Naive thymus-derived CD4-positive, alpha-beta T cell (primary cell): ENCODE measurements at regions of chr4 and their contacts with region 1.

Region 1: DNA sequence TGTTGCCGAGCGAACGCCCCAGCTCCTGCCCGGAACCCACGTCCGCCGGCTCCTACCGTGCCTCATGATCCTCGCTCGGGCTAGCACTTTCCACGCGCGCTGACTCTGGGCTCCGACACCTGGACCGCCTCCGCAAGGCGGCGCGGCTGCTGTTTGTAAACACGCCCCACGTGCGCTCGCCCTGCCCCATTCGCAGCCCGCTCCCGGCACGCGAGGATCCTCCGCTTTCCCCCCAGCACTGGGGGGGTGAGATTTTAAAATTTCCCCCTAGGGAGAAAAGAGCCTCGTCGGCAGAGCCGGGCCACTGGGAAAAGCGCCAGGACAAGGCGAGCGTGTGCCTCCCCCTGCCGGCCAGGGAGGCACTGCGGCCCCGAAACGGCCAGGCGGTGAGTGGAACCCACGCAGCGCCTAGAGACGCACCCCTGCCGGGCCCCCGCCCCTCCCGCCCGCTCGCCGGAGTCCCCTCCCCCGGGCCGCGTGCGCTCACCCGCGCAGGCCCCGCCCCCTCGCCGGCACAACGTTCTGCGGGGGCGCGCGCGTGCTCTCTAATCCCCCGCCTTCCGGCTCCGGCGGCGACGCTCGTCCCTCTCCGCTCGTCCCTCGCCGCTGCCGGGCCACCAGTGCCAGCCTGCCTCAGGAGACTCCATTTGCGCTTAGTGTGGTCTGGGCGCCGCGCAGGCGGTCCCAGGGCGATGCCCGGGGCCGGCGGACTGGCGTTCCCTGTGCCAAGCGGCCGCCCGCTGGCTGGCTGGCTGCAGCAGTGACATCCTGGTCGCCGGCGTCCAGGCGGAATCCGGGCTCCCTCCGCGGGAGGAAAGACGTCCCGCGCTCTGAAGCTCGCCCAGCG is at the start of gene TIGD2:
- DNase-seq: peak; percentile 81 to 90 (median 87)
- ATAC-seq: peak; percentile 97
- H3K4me3 ChIP-seq: peak within 1 kb of the TSS; percentile 80
- H3K4me3 Mint-ChIP-seq: peak within 1 kb of the TSS; percentile 84 to 93 (median 90)
- H3K27ac ChIP-seq: peak within 1 kb of the TSS; percentile 81
- H3K27ac Mint-ChIP-seq: peak within 1 kb of the TSS; percentile 80 to 94 (median 89)
- H3K4me1 ChIP-seq: peaks cover 10 to 15% of the 10 kb centered on the region in 2 donors
- H3K4me1 Mint-ChIP-seq: peaks cover 20 to 28% (median 24%) of the 10 kb centered on the region in 7 donors
- H3K27me3 ChIP-seq: no peaks in the 10 kb centered on the region
- H3K27me3 Mint-ChIP-seq: peaks cover 0 to 25% (median 0%) of the 10 kb centered on the region in 5 donors
- total RNA-seq, gene TIGD2: 3.0 to 7.9 (median 5.2) TPM

Region 2: DNA sequence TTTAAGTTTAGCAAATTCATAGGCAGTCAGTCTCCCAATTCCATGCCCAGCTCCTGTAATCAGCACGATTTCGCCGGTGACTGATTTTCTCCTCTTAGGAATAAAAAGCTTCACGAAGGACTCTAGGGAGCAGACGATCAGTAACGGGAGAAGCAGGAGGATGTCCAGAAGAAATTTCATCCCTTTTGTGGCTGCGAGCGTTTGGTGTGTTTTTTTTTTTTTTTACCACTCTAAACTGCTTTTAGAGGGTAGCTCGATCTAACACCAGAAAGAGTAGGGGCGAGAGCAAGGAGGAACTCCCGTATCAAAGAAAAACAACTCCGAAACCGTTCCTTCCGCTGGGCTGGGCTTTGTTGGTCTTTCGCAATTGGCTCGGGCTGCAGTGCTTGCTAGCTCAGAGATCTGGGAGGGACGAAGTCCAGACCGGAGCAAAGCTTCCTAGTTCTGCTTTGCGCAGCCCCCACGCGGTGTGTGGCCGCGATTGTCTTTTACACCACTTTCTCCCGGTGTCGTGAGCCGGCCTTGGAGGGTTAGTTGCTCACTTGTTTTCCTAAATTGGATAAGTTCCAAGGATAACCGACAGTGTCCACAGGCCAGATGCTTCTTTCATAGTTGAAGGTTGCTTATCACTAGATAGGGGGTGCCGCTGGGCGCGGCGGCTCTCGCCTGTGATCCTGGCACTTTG is 1720.2 kb before region 1 on chr4 and contains the start of gene HSD17B11:
- CTCF ChIA-PET with region 1: no interaction called
- POLR2A ChIA-PET with region 1: no interaction called
- intact Hi-C with region 1: loop called in 1 of 2 experiments (anchors 1 kb)
- DNase-seq: peak; percentile 44 to 83 (median 79)
- ATAC-seq: peak; percentile 99
- H3K4me3 ChIP-seq: peak within 1 kb of the TSS; percentile 85
- H3K4me3 Mint-ChIP-seq: peak within 1 kb of the TSS; percentile 87 to 99 (median 97)
- H3K27ac ChIP-seq: peak within 1 kb of the TSS; percentile 82
- H3K27ac Mint-ChIP-seq: peak within 1 kb of the TSS; percentile 83 to 96 (median 94)
- H3K4me1 ChIP-seq: peaks cover 10 to 17% of the 10 kb centered on the region in 2 donors
- H3K4me1 Mint-ChIP-seq: peaks cover 32 to 66% (median 57%) of the 10 kb centered on the region in 7 donors
- H3K27me3 ChIP-seq: no peaks in the 10 kb centered on the region
- H3K27me3 Mint-ChIP-seq: peaks cover 0 to 14% (median 0%) of the 10 kb centered on the region in 5 donors
- total RNA-seq, gene HSD17B11: 34.3 to 74.4 (median 61.0) TPM

Region 3: DNA sequence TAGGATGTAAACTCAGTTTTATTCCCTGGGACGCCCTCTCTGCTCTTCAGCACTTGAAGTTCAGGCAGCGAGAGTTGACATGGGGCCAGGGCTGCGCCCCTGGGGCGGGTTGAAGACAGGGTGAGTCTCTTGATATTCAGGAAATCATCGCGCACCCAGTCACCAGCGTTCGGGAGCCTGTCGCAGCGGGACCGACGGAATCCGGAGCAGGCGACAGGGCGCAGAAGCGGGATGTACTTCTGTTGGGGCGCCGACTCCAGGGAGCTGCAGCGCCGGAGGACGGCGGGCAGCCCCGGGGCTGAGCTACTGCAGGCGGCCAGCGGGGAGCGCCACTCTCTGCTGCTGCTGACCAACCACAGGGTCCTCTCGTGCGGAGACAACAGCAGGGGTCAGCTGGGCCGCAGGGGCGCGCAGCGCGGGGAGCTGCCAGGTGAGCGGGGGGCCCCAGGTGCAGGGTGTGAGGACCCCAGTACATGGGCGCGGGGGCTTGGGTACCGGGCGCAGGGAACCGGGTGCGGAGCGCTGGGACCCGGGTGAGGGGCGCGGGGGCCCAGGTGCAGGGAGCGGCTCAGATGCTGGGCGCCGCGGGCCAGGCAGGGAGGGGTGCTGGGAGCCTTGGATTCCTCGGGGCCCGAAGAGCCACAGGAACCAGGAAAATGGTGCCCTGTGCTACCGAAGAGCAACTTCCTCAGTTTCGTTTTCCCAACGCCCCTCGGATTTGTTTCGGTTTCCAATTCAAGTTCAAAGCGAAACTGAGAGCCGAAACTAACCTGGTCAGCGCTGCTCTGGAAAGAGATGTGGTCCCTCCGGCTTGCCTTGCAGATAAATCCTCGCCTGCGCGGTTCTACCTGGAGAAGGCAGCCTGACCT is 732.3 kb before region 1 on chr4 and contains the start of gene HERC6:
- CTCF ChIA-PET with region 1: no interaction called
- POLR2A ChIA-PET with region 1: no interaction called
- intact Hi-C with region 1: loop called (anchors 2 to 5 kb)
- DNase-seq: peak; percentile 49 to 77 (median 70)
- ATAC-seq: peak; percentile 80
- H3K4me3 ChIP-seq: peak within 1 kb of the TSS; percentile 95
- H3K4me3 Mint-ChIP-seq: peak within 1 kb of the TSS; percentile 88 to 98 (median 94)
- H3K27ac ChIP-seq: peak within 1 kb of the TSS; percentile 92
- H3K27ac Mint-ChIP-seq: peak within 1 kb of the TSS; percentile 91 to 99 (median 94)
- H3K4me1 ChIP-seq: peaks cover 21 to 27% of the 10 kb centered on the region in 2 donors
- H3K4me1 Mint-ChIP-seq: peaks cover 24 to 60% (median 46%) of the 10 kb centered on the region in 7 donors
- H3K27me3 ChIP-seq: no peaks in the 10 kb centered on the region
- H3K27me3 Mint-ChIP-seq: no peaks in the 10 kb centered on the region
- total RNA-seq, gene HERC6: 12.6 to 43.5 (median 23.0) TPM

Region 4: GRCh38 chr4:88591787-88592599 is 519.2 kb before region 1 on chr4 and contains the start of gene HERC3:
- CTCF ChIA-PET with region 1: no interaction called
- POLR2A ChIA-PET with region 1: no interaction called
- intact Hi-C with region 1: loop called (anchors 1 kb)
- DNase-seq: peak; percentile 87 to 92 (median 91)
- ATAC-seq: peak; percentile 94
- H3K4me3 ChIP-seq: peak within 1 kb of the TSS; percentile 60
- H3K4me3 Mint-ChIP-seq: peak within 1 kb of the TSS; percentile 94 to 100 (median 98)
- H3K27ac ChIP-seq: peak within 1 kb of the TSS; percentile 93
- H3K27ac Mint-ChIP-seq: peak within 1 kb of the TSS; percentile 83 to 99 (median 97)
- H3K4me1 ChIP-seq: peaks cover 10 to 20% of the 10 kb centered on the region in 2 donors
- H3K4me1 Mint-ChIP-seq: peaks cover 34 to 58% (median 49%) of the 10 kb centered on the region in 7 donors
- H3K27me3 ChIP-seq: no peaks in the 10 kb centered on the region
- H3K27me3 Mint-ChIP-seq: peaks cover 0 to 31% (median 0%) of the 10 kb centered on the region in 5 donors
- total RNA-seq, gene HERC3: 38.1 to 130 (median 104) TPM

Region 5: DNA sequence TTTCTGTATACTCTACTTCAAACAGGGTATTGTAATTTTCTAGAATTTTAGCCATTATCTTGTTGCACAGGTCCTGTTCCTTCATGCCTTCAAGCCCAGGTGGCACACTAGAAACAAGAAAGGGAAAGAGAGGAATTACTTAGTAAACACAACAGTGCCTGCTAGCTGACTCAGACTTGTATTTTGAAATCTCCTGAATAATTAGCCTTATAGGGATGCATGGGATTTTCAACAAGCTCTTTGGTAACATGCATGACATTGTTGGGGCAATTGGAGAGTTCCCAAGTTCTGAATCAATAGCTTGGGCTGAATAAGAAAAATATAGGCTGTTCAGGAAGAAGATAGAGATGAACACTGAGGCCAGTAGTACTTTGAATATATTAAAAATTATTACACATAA is 173.1 kb before region 1 on chr4:
- CTCF ChIA-PET with region 1: no interaction called
- POLR2A ChIA-PET with region 1: no interaction called
- intact Hi-C with region 1: loop called in 1 of 2 experiments (anchors 2 kb)
- DNase-seq: no peak
- ATAC-seq: no peak
- H3K4me3 ChIP-seq: no peak overlapping the region
- H3K4me3 Mint-ChIP-seq: no peak overlapping the region
- H3K27ac ChIP-seq: no peak overlapping the region
- H3K27ac Mint-ChIP-seq: peak overlapping the region in 2 of 9 donors; percentile 15 to 30
- H3K4me1 ChIP-seq: peaks cover 0 to 33% of the 10 kb centered on the region in 2 donors
- H3K4me1 Mint-ChIP-seq: peaks cover 20 to 69% (median 54%) of the 10 kb centered on the region in 7 donors
- H3K27me3 ChIP-seq: no peaks in the 10 kb centered on the region
- H3K27me3 Mint-ChIP-seq: no peaks in the 10 kb centered on the region

Region 6: GRCh38 chr4:89294573-89295269 is 183.5 kb after region 1 on chr4:
- CTCF ChIA-PET with region 1: no interaction called
- POLR2A ChIA-PET with region 1: no interaction called
- intact Hi-C with region 1: loop called in 1 of 2 experiments (anchors 5 kb)
- DNase-seq: peak in 7 of 9 donors; percentile 62 to 88 (median 81)
- ATAC-seq: peak; percentile 86
- H3K4me3 ChIP-seq: peak overlapping the region; percentile 21
- H3K4me3 Mint-ChIP-seq: peak overlapping the region; percentile 38 to 83 (median 73)
- H3K27ac ChIP-seq: peak overlapping the region; percentile 69
- H3K27ac Mint-ChIP-seq: peak overlapping the region; percentile 81 to 97 (median 94)
- H3K4me1 ChIP-seq: peaks cover 73 to 82% of the 10 kb centered on the region in 2 donors
- H3K4me1 Mint-ChIP-seq: peaks cover 57 to 99% (median 86%) of the 10 kb centered on the region in 7 donors
- H3K27me3 ChIP-seq: no peaks in the 10 kb centered on the region
- H3K27me3 Mint-ChIP-seq: no peaks in the 10 kb centered on the region